Endothelial cell of umbilical vein (primary cell): ENCODE measurements at regions of chr7 and their contacts with region 1.

Region 1: DNA sequence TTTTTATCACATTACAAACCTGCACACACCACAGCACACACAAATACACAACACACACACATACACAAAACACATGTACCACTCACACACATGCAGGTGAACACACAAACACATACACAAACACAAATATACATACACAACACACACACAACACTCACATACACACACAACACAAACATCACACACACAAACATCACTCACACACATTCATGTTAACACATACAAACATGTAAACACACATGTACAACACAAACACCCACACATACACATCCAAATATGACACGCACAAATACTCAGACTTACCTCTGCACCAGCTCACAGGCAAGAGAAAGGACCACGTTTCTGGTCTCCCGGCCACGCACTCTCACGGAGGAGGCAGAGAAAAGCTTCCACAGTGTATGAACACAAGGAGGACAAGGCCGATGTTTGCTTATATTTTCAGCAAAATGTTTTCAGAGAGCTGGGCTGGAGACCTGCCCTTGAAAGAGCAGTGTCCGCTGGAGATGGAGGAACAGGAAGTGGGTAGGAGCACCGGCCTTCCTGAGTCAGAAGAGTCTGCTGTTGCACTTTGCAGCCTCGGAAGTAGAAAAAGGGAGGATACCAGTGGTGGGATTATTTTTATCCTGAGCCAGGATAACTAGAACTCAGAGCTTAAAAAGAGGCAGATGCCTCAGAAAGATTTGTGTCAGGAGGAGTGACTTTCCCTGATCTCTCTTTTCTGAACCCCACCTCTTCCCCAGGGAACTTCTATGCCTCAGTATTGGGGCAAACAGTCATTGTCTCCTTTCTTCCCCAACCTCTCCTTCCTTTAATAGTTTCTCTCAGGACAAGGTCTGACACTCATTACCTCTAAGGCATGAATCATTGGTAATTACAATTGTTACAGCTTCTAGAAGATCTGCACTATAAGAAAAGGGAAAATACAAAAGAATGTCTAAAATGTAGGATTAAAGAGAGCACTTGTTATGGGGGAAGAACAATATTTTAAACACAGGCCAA is at the start of gene GIMAP6:
- DNase-seq: peak; percentile 74
- H3K4me3 ChIP-seq: peak within 1 kb of the TSS; percentile 7 to 80 (median 49)
- H3K27ac ChIP-seq: peak within 1 kb of the TSS; percentile 43
- H3K4me1 ChIP-seq: peaks cover 35% of the 10 kb centered on the region
- H3K27me3 ChIP-seq: no peaks in the 10 kb centered on the region
- CTCF ChIP-seq: no peak
- POLR2A ChIP-seq: peak; percentile 69
- total RNA-seq, gene GIMAP6: 85.0 and 87.8 TPM in 2 replicates

Region 2: DNA sequence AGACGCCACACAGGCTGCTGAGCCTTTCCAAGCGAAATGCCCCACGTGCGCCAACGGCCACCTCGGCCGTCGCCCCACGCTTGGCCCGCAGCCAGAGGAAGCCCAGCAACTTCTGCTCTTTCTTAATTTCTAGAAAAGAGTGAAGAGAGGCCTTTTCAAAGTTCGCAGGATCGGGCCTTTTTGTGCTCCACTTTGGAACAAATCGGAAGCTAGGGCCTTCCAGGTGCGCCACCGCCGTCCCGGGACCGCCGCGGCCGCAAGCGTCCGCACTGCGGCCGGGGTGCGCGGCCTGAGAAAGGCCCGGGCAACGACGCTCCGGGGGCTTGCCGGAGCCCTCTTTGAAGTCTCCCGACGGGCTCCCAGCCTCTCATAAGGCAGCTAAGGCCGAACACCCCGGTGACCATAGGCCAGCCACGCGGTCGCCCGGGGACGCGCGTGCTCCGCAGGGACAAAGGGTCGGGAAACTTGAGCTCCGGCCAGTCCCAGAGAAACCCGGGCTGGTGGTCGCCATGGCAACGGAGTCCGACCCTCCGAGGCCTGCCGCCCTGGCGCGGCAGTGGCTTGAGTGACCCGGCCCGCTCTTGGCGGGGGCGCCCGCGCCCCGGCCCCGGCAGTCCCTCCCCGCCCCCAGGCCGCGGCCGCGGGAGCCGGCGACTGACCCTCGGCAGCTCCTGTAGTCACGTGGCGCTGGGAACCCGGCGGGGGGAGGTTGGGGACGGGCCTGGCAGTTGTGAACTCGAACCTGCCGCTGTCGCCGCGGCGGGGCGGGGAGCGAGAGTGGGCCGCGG is 263.9 kb before region 1 on chr7 and contains the start of gene REPIN1:
- CTCF ChIA-PET with region 1: no interaction called
- POLR2A ChIA-PET with region 1: no interaction called
- dilution Hi-C with region 1: no loop called
- intact Hi-C with region 1: loop called (anchors 5 kb)
- DNase-seq: peak; percentile 76
- H3K4me3 ChIP-seq: peak within 1 kb of the TSS; percentile 49 to 79 (median 62)
- H3K27ac ChIP-seq: peak within 1 kb of the TSS; percentile 57
- H3K4me1 ChIP-seq: peaks cover 26% of the 10 kb centered on the region
- H3K27me3 ChIP-seq: no peaks in the 10 kb centered on the region
- CTCF ChIP-seq: no peak
- POLR2A ChIP-seq: no peak
- total RNA-seq, gene REPIN1: 139 and 140 TPM in 2 replicates

Region 3: GRCh38 chr7:150514748-150515222 is 117.4 kb before region 1 on chr7 and contains the start of gene GIMAP7:
- CTCF ChIA-PET with region 1: no interaction called
- POLR2A ChIA-PET with region 1: no interaction called
- dilution Hi-C with region 1: no loop called
- intact Hi-C with region 1: loop called (anchors 2 kb)
- DNase-seq: peak; percentile 81
- H3K4me3 ChIP-seq: peak within 1 kb of the TSS; percentile 69 to 92 (median 91)
- H3K27ac ChIP-seq: peak within 1 kb of the TSS; percentile 61
- H3K4me1 ChIP-seq: peaks cover 21% of the 10 kb centered on the region
- H3K27me3 ChIP-seq: no peaks in the 10 kb centered on the region
- CTCF ChIP-seq: no peak
- POLR2A ChIP-seq: peak; percentile 81
- total RNA-seq, gene GIMAP7: 42.4 and 51.1 TPM in 2 replicates

Region 4: GRCh38 chr7:150586785-150587152 is 45.4 kb before region 1 on chr7:
- CTCF ChIA-PET with region 1: interaction called, 11 read pairs
- POLR2A ChIA-PET with region 1: interaction called, 6 read pairs
- dilution Hi-C with region 1: no loop called
- intact Hi-C with region 1: loop called (anchors 1 kb)
- DNase-seq: peak; percentile 96
- H3K4me3 ChIP-seq: peak overlapping the region in 1 of 3 experiments; percentile 24
- H3K27ac ChIP-seq: peak overlapping the region; percentile 93
- H3K4me1 ChIP-seq: peaks cover 34% of the 10 kb centered on the region
- H3K27me3 ChIP-seq: no peaks in the 10 kb centered on the region
- CTCF ChIP-seq: no peak
- POLR2A ChIP-seq: no peak

Region 5: GRCh38 chr7:150685219-150686029 is 53.3 kb after region 1 on chr7 and contains the start of gene GIMAP2:
- CTCF ChIA-PET with region 1: interaction called, 4 read pairs
- POLR2A ChIA-PET with region 1: no interaction called
- dilution Hi-C with region 1: no loop called
- intact Hi-C with region 1: loop called (anchors 2 kb)
- DNase-seq: peak; percentile 87
- H3K4me3 ChIP-seq: peak within 1 kb of the TSS; percentile 22 to 93 (median 90)
- H3K27ac ChIP-seq: peak within 1 kb of the TSS; percentile 83
- H3K4me1 ChIP-seq: peaks cover 15% of the 10 kb centered on the region
- H3K27me3 ChIP-seq: no peaks in the 10 kb centered on the region
- CTCF ChIP-seq: no peak
- POLR2A ChIP-seq: no peak
- total RNA-seq, gene GIMAP2: 26.2 and 27.9 TPM in 2 replicates

Region 6: GRCh38 chr7:150876817-150877526 is 244.8 kb after region 1 on chr7:
- CTCF ChIA-PET with region 1: no interaction called
- POLR2A ChIA-PET with region 1: no interaction called
- dilution Hi-C with region 1: no loop called
- intact Hi-C with region 1: loop called (anchors 5 kb)
- DNase-seq: peak; percentile 89
- H3K4me3 ChIP-seq: no peak overlapping the region
- H3K27ac ChIP-seq: no peak overlapping the region
- H3K4me1 ChIP-seq: peaks cover 10% of the 10 kb centered on the region
- H3K27me3 ChIP-seq: peaks cover 8 to 50% of the 10 kb centered on the region in 2 experiments
- CTCF ChIP-seq: peak; percentile 46 to 63
- POLR2A ChIP-seq: no peak